ENCODE measurements at regions of chr3 and their contacts with region 1.

Region 1: GRCh38 chr3:138935848-138936740 is 10.8 kb downstream of the FOXL2 start:
- DNase-seq: no peak
- H3K4me3 ChIP-seq: peak overlapping the region; percentile 28
- H3K27me3 ChIP-seq: peaks cover 53% of the 10 kb centered on the region
- CTCF ChIP-seq: peak; percentile 93

Region 2: DNA sequence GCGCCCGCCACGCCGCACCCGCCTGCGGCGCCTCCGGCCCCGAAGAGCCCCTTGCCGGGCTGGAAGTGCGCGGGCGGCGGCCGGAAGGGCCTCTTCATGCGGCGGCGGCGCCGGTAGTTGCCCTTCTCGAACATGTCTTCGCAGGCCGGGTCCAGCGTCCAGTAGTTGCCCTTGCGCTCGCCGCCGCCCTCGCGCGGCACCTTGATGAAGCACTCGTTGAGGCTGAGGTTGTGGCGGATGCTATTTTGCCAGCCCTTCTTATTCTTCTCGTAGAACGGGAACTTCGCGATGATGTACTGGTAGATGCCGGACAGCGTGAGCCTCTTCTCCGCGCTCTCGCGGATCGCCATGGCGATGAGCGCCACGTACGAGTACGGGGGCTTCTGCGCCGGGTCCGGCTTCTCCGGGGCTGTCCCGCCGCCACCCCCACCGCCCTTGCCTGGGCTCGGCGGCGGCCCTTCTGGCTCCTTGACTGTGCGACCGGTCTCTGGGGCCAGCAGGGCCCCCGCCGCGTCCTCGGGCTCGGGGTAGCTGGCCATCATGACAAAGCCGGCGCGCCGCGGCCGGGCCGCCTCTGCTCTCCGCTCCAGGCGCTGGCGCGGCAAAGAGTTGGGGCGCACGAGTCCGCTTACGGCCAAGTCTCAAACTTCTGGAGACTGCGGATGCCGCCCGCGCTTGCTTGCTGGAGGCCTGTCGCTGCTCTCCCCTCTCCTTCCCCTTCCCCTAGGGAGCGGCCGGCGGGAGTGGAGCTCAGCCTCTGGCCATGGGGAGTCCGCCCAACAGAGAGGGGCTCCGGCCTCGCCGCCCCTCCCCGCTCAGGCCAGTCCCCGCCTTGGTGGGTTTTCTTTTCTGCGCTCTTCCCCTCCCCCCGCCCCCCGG is 10.3 kb after region 1 on chr3:
- CTCF ChIA-PET with region 1: interaction called, 24 read pairs
- POLR2A ChIA-PET with region 1: no interaction called
- DNase-seq: no peak
- H3K4me3 ChIP-seq: peak overlapping the region; percentile 33
- H3K27me3 ChIP-seq: peaks cover 74% of the 10 kb centered on the region
- CTCF ChIP-seq: peak; percentile 31

Region 3: DNA sequence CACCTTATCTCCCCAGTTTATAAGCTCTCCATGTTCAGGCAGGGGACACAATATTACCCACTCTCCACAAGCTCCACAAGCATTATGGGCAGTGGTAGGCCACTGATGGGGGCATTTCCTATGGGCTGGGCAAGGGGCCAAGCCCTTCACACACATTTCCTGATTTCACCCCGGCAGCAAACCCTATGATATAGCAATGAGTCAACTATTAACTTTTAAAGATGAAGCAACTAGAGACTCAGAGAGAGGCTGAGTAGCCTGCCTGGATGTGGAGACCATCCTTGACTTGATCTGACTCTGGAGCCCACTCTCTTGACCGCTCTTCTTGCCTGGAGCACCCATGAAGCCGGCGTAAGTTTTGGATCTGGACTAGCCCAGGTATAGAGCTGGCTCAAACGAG is 38.4 kb after region 1 on chr3:
- CTCF ChIA-PET with region 1: interaction called, 18 read pairs
- POLR2A ChIA-PET with region 1: no interaction called
- DNase-seq: no peak
- H3K4me3 ChIP-seq: no peak overlapping the region
- H3K27me3 ChIP-seq: peaks cover 2% of the 10 kb centered on the region
- CTCF ChIP-seq: no peak